ENCODE measurements at regions of chr12 and their contacts with region 1.

Region 1: DNA sequence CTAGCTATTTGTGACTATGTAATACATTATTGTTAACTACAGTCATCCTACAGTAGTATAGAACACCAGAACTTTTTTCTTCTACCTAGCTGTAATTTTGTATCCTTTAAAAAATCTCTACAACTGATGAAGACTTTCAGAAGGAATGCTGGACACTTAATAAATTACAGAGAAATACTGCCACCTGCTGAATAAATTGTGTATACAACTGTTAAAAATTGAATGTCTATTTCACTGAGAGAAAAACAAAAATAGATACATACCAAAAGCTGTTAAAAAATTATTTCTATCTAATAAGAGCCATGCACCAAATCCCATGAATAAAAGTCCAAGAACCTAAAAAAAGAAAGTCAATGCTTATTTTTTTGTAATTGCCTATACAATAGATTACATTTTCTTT is 6.6 kb downstream of the TSPAN19 start:
- DNase-seq: peak; percentile 71
- ATAC-seq: peak; percentile 65; the same call in 1 of the 2 replicates
- H3K4me3 ChIP-seq: no peak overlapping the region
- H3K27ac ChIP-seq: no peak overlapping the region
- H3K4me1 ChIP-seq: no peaks in the 10 kb centered on the region
- H3K27me3 ChIP-seq: peaks cover 14% of the 10 kb centered on the region
- CTCF ChIP-seq: peak; percentile 73

Region 2: DNA sequence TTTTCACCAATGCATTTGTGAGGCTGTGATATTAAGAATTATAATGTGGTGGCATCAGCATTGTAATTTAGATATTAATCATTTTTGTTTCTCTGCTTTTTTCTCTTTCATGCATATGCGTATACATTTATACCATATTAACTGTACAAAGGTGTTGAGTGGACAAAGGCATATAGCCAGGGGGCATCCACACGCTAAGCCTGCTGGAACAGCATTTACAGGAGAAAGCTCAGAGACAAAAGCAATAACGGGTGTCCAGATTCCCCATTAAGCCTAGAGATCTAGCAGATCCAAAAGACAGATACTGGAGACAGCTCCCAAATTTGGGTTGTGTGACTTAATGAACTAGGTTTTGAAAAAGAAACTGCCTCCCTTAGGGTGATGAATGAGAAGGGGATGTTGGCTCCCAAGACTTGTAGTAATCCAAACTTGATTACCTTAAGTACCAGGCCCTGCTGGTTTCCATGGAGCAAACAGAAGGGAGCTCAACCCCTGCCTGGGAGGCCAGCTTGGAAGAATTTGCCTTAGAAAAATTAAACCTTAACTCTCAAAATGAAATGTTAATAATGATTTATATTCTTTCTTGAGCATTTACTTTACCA is 298.8 kb before region 1 on chr12:
- CTCF ChIA-PET with region 1: no interaction called
- POLR2A ChIA-PET with region 1: no interaction called
- intact Hi-C with region 1: no loop called
- DNase-seq: no peak
- ATAC-seq: no peak
- H3K4me3 ChIP-seq: no peak overlapping the region
- H3K27ac ChIP-seq: no peak overlapping the region
- H3K4me1 ChIP-seq: 0 out of 2 replicates have a peak, but pooled peaks cover 9% of the 10 kb centered on the region
- H3K27me3 ChIP-seq: no peaks in the 10 kb centered on the region
- CTCF ChIP-seq: no peak

Region 3: DNA sequence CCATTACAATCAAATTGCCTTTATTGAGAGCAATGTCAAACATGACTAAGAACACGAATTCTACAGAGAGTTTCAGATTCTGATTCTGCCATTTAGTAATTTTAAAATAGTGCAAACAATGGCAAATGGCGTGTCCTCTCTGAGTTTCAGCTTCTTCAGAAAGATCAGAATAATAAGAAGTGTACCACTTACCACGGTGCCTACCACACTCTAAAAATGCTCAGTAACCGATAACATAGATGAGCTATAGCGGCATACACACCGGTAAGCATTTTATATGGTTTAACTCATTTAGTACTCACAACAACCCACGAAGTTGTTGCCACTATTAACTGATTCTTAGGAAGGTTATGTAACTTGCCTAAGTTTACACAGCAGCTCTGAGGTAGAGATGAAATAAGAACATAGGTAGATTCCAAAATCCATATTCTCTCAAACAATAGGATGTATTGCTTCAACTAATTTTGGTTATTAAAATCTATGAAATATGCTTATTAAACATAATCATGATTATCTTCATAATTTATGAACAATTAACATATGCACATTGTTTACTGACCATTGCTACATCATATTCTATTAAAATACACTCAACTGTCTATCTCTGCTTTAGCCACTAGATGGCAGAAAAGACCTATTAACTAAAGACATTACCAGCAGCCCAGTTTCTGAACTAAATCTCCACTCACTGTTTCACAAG is 155.2 kb before region 1 on chr12:
- CTCF ChIA-PET with region 1: interaction called, 14 read pairs
- POLR2A ChIA-PET with region 1: no interaction called
- intact Hi-C with region 1: loop called (anchors 1 kb)
- DNase-seq: peak; percentile 81
- ATAC-seq: peak; percentile 93
- H3K4me3 ChIP-seq: no peak overlapping the region
- H3K27ac ChIP-seq: no peak overlapping the region
- H3K4me1 ChIP-seq: no peaks in the 10 kb centered on the region
- H3K27me3 ChIP-seq: no peaks in the 10 kb centered on the region
- CTCF ChIP-seq: peak; percentile 82

Region 4: DNA sequence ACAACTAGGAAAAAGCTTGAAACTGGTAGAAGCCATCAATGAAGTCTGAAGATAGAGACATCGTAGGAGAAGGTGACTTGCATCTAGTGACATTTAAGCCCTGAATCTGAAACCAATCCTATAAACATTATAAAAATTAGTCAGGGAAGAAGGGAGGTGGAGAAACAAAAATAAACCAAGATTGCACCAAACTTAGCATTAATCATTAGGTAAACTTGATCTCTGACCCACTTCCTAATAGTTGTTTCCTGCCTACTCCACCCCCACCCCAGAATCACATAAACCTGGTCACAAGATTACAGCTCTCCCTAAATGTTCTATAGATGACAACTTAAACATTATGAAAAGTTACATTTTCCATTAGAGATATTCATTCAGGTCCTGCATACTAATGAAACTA is 33.8 kb before region 1 on chr12:
- CTCF ChIA-PET with region 1: no interaction called
- POLR2A ChIA-PET with region 1: no interaction called
- intact Hi-C with region 1: loop called (anchors 1 kb)
- DNase-seq: peak; percentile 42
- ATAC-seq: peak; percentile 94
- H3K4me3 ChIP-seq: no peak overlapping the region
- H3K27ac ChIP-seq: no peak overlapping the region
- H3K4me1 ChIP-seq: peaks cover 11% of the 10 kb centered on the region; the same call in 1 of the 2 replicates
- H3K27me3 ChIP-seq: no peaks in the 10 kb centered on the region
- CTCF ChIP-seq: no peak

Region 5: GRCh38 chr12:85057370-85057963 is 28.0 kb after region 1 on chr12:
- CTCF ChIA-PET with region 1: no interaction called
- POLR2A ChIA-PET with region 1: no interaction called
- intact Hi-C with region 1: loop called (anchors 2 kb)
- DNase-seq: peak; percentile 79
- ATAC-seq: no peak; the same call in 1 of the 2 replicates
- H3K4me3 ChIP-seq: no peak overlapping the region
- H3K27ac ChIP-seq: no peak overlapping the region
- H3K4me1 ChIP-seq: no peaks in the 10 kb centered on the region
- H3K27me3 ChIP-seq: peaks cover 26% of the 10 kb centered on the region; the same call in 1 of the 2 replicates
- CTCF ChIP-seq: peak; percentile 85

Region 6: DNA sequence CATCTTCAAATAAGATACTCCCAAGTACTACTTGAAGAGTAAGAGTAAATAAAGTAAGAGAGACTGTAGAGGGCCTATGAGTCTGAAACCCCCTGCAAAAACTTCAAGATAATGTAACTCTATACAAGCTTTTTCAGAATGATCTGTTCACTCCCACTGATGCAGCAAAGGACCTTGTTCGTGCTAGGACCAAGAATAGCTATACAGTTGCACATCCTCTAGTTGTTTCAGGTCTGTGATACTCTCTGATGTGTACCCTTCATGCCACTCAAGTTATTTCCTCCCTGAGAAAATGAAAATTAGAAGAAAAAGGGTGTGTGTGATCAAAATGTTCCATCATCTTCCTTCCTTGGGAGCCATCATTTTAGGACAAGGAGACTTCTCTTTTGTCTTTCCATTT is 454.9 kb after region 1 on chr12:
- CTCF ChIA-PET with region 1: no interaction called
- POLR2A ChIA-PET with region 1: no interaction called
- intact Hi-C with region 1: no loop called
- DNase-seq: no peak
- ATAC-seq: no peak
- H3K4me3 ChIP-seq: no peak overlapping the region
- H3K27ac ChIP-seq: no peak overlapping the region
- H3K4me1 ChIP-seq: peaks cover 8% of the 10 kb centered on the region
- H3K27me3 ChIP-seq: no peaks in the 10 kb centered on the region
- CTCF ChIP-seq: no peak

Measured in PC-3 (cell line).